ENCODE measurements at regions of chr1 and their contacts with region 1.

Region 1: DNA sequence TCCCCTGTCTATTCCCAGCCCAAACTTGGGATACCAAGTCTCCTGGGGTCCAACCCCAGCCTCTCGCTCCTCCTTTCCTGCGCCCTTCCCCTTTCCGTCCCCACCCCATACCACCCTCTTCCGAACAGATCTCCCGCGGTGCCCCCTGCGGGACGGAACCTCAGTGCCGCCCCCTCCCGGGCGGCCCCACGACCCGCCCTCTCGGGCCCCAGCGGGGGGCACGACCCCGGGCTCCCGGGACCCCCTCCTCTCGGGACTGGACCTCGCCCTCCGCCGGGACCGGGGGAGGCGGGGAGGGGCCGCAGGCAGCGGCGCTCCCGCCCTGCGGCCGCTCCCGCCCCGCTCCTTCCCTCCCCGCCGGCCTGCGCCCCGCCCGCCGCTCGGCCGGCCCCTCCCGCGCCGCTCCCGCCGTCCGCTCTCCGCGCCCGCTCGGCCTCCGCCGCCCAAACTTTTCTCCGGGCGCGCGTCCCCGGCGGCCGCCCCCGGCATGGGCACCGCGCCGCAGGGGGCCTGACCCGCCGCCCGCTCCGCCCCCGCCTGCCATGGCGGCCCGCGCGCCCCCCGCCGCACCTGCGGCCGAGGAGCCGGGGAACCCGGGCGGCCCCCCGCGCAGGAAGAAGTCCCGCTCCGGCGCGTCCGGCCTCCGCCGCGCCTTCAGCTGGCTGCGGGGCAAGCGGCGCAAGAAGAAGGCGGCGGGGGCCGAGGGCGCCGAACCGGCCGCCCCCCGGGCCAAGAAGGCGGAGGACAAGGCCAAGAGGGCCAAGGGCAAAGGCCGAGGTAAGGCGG is 39.0 kb upstream of the SYNC start:
- DNase-seq: peak in 1 of 2 experiments; percentile 71
- H3K4me3 ChIP-seq: peak overlapping the region; percentile 56 to 94 (median 66)
- H3K27ac ChIP-seq: no peak overlapping the region
- H3K4me1 ChIP-seq: peaks cover 9 to 32% (median 28%) of the 10 kb centered on the region in 4 experiments
- H3K27me3 ChIP-seq: peaks cover 0 to 12% (median 4%) of the 10 kb centered on the region in 4 experiments; a peak in 4 of 7 replicates
- CTCF ChIP-seq: peak; percentile 16 to 38 (median 20)
- EP300 ChIP-seq: no peak
- POLR2A ChIP-seq: no peak
- RAD21 ChIP-seq: no peak; a peak in 1 of 4 replicates

Region 2: DNA sequence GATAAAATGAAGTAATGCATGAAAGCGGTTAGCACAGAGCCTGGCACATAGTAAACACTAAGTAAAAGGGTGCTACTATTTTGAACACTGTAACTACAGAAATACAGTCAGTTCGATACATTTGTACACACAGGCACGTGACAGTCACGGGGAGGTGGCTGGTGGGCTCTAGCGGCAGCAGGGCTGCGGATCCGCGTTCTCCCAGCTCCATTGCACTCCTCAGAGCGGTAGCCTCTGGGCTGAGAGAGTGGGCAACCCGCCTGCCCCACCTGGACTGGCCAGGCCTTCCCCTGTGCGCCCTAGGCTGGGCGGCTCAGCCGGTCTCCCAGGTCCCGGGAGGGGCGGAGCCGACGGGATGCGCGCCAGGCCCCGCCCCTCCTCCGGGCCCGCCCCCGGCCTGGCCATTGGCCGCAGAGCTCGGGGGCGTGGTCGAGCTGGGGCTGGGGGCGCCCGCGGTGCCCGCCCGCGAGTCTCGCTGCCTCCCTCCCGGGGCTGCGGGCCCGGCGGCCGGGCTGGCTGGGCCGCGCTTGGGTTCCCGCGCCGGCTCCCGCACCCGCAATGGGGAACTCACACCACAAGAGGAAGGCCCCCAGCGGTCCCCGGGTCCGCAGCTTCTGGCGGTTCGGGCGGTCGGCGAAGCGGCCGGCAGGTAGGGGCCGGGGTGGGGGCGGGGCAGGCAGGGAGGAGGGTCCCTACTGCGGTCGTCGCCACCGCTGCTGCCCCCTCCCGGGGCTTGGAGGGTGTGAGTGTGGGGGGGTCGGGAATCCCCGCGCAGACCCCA is 12.1 kb after region 1 on chr1:
- CTCF ChIA-PET with region 1: interaction called, 7 read pairs
- POLR2A ChIA-PET with region 1: interaction called, 87 read pairs
- DNase-seq: peak; percentile 59 to 91
- H3K4me3 ChIP-seq: peak overlapping the region; percentile 79 to 100 (median 94)
- H3K27ac ChIP-seq: peak overlapping the region; percentile 92
- H3K4me1 ChIP-seq: peaks cover 16 to 37% (median 22%) of the 10 kb centered on the region in 4 experiments
- H3K27me3 ChIP-seq: no peaks in the 10 kb centered on the region
- CTCF ChIP-seq: peak in 1 of 3 experiments; percentile 26; a peak in 1 of 4 replicates
- EP300 ChIP-seq: no peak
- POLR2A ChIP-seq: peak in 1 of 2 experiments; percentile 70; a peak in 2 of 3 replicates
- RAD21 ChIP-seq: peak; percentile 3 to 15; a peak in 2 of 4 replicates

Measured in H1 (cell line).